Activated T-helper 2 cell treated with anti-CD3 and anti-CD28 coated beads, Interferon-gamma antibody, Interleukin-2, Interleukin-4, amounts not matched to agents 10 μg/mL and 5 μg/mL and 100 μg/mL, durations not matched to agents 14 hours and 24 hours and 36 hours (primary cell): ENCODE measurements at regions of chr6 and their contacts with region 1.

Region 1: GRCh38 chr6:35688581-35689322 is at the start of gene FKBP5:
- DNase-seq: peak; percentile 86
- H3K4me3 Mint-ChIP-seq: peak within 1 kb of the TSS; percentile 92
- H3K27ac Mint-ChIP-seq: peak within 1 kb of the TSS; percentile 87
- H3K4me1 Mint-ChIP-seq: peaks cover 13% of the 10 kb centered on the region
- H3K27me3 Mint-ChIP-seq: no peaks in the 10 kb centered on the region
- total RNA-seq, gene FKBP5: 88.1 and 90.9 TPM in 2 replicates

Region 2: GRCh38 chr6:35601331-35602132 is 87.2 kb before region 1 on chr6:
- intact Hi-C with region 1: loop called (anchors 5 kb)
- DNase-seq: peak; percentile 41
- H3K4me3 Mint-ChIP-seq: peak overlapping the region; percentile 59
- H3K27ac Mint-ChIP-seq: peak overlapping the region; percentile 74
- H3K4me1 Mint-ChIP-seq: peaks cover 48% of the 10 kb centered on the region
- H3K27me3 Mint-ChIP-seq: no peaks in the 10 kb centered on the region

Region 3: DNA sequence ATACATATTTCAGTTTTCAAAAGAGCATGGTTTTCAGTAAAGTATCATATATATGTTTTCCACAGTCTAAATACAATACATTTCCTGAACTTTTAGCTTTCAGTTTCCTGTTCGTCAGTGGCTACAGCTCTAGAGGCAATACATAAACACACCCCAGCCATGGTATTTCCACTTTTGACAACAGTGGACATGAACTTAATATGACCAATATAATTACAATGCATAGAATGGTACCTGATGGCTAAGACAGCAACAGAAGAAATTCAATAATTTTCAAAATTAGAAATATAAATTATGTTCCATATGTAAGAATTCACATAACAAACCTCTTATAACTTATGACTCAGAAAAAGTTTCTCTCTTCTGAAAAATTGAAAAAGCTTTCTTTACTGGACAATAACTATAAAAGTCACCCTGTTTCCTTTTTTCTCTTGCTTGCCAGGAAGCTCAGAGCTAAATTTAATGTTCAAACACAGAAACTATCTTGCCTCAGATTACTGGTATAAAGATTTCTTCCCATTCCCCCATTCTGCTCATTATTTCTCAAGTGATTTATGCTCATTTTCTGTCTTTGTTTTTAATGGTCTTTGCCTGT is 19.2 kb before region 1 on chr6:
- intact Hi-C with region 1: loop called (anchors 1 kb)
- DNase-seq: no peak
- H3K4me3 Mint-ChIP-seq: peak overlapping the region; percentile 63
- H3K27ac Mint-ChIP-seq: peak overlapping the region; percentile 82
- H3K4me1 Mint-ChIP-seq: peaks cover 35% of the 10 kb centered on the region
- H3K27me3 Mint-ChIP-seq: no peaks in the 10 kb centered on the region

Region 4: GRCh38 chr6:35719830-35720733 is 31.3 kb after region 1 on chr6:
- intact Hi-C with region 1: loop called (anchors 1 kb)
- DNase-seq: no peak
- H3K4me3 Mint-ChIP-seq: peak overlapping the region; percentile 40
- H3K27ac Mint-ChIP-seq: peak overlapping the region; percentile 95
- H3K4me1 Mint-ChIP-seq: peaks cover 43% of the 10 kb centered on the region
- H3K27me3 Mint-ChIP-seq: no peaks in the 10 kb centered on the region